ENCODE measurements at regions of chr6 and their contacts with region 1.

Region 1: DNA sequence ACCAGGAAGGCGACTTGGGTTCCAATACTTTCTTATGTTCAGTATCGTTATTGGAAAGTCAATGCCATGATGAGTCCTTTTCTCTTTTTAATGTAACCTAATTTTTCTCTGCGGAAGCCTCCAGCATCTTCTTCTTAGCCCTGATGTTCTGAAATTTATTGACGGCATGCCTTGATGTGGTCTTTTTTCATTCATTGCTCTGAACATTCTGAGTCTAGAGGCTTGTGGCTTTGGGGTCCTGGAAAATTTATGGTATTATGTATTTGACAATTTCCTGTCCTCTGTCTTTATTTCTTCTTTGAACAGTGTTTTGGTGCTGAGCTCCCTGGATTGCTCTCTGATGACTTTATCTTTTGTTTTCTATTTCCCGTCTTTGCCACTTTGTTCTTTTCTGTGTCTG is 28.7 kb upstream of the MAS1 start:
- DNase-seq: no peak
- H3K4me3 ChIP-seq: no peak overlapping the region
- H3K4me3 Mint-ChIP-seq: no peak overlapping the region
- H3K27ac ChIP-seq: no peak overlapping the region
- H3K27ac Mint-ChIP-seq: peak overlapping the region in 1 of 7 donors; percentile 57
- H3K4me1 ChIP-seq: peaks cover 8 to 17% of the 10 kb centered on the region in 2 donors
- H3K4me1 Mint-ChIP-seq: peaks cover 23% of the 10 kb centered on the region
- H3K27me3 ChIP-seq: no peaks in the 10 kb centered on the region
- H3K27me3 Mint-ChIP-seq: peaks cover 0 to 6% (median 1%) of the 10 kb centered on the region in 3 donors
- CTCF ChIP-seq: no peak

Region 2: DNA sequence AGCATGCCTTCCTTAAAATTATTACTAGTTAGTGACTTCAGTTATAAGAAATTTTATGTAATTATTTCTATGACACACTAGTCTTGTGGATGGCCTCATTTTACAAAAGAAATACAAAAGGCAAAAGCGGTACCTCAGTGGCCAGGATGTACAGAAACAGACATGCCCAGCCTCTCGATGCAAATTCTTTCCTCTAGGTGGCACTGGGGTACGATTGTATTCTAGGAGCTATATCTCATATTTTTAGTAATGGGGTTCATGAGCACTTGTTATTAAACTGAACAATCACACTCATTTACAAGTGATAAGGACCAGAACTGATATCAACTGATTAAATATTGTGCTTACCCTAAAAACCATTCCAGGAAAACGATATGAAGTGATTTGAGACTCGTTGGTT is 228.9 kb before region 1 on chr6:
- intact Hi-C with region 1: no loop called
- DNase-seq: no peak
- H3K4me3 ChIP-seq: no peak overlapping the region
- H3K4me3 Mint-ChIP-seq: no peak overlapping the region
- H3K27ac ChIP-seq: no peak overlapping the region
- H3K27ac Mint-ChIP-seq: peak overlapping the region in 1 of 7 donors; percentile 33
- H3K4me1 ChIP-seq: no peaks in the 10 kb centered on the region
- H3K4me1 Mint-ChIP-seq: peaks cover 4% of the 10 kb centered on the region
- H3K27me3 ChIP-seq: no peaks in the 10 kb centered on the region
- H3K27me3 Mint-ChIP-seq: no peaks in the 10 kb centered on the region
- CTCF ChIP-seq: peak; percentile 16

Region 3: DNA sequence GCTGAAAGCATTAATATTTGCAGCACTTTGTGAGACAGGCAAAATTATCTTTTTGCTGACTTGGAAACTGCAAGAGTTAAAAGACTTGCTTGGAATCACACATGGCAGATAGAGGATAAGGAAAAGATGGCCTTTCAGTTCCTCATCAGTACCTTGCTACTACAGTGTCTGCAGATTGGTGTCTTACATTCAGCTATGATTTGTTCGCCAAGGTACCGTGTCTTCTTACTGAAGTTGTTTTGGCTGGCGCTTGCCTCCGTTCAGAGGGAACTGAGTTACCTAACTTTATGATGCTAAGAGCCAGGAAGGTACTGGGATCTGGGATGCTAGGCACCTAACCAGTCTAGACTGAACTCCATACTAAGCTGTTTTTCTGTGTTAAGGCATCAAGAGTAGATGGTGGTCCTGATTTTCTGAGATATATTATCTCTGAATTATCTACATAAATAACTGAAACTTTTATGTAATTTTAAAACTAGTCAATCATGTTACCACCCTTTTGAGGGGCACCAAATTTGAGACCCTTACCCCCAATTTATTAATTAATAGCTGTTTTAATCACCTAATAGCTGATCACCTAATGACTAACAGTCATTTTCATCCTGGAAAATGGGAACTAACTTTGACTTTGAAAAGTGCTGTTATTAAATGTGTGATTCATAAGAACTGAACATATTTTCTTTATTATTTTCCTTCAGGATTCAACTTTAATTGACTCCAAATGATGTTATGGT is 132.3 kb before region 1 on chr6:
- intact Hi-C with region 1: no loop called
- DNase-seq: peak in 2 of 3 donors; percentile 30 to 43
- H3K4me3 ChIP-seq: peak overlapping the region in 1 of 3 experiments; percentile 97
- H3K4me3 Mint-ChIP-seq: peak overlapping the region; percentile 89 to 90
- H3K27ac ChIP-seq: peak overlapping the region in 1 of 2 donors; percentile 89
- H3K27ac Mint-ChIP-seq: peak overlapping the region; percentile 24 to 81 (median 58)
- H3K4me1 ChIP-seq: peaks cover 27 to 44% of the 10 kb centered on the region in 2 donors
- H3K4me1 Mint-ChIP-seq: peaks cover 53% of the 10 kb centered on the region
- H3K27me3 ChIP-seq: no peaks in the 10 kb centered on the region
- H3K27me3 Mint-ChIP-seq: no peaks in the 10 kb centered on the region
- CTCF ChIP-seq: no peak

Region 4: GRCh38 chr6:159829526-159829925 is 32.6 kb before region 1 on chr6:
- intact Hi-C with region 1: no loop called
- DNase-seq: peak; percentile 29 to 37 (median 34)
- H3K4me3 ChIP-seq: peak overlapping the region in 1 of 3 experiments; percentile 7
- H3K4me3 Mint-ChIP-seq: peak overlapping the region in 1 of 2 donors; percentile 59
- H3K27ac ChIP-seq: peak overlapping the region; percentile 26 to 39
- H3K27ac Mint-ChIP-seq: peak overlapping the region; percentile 17 to 85 (median 76)
- H3K4me1 ChIP-seq: peaks cover 28 to 32% of the 10 kb centered on the region in 2 donors
- H3K4me1 Mint-ChIP-seq: peaks cover 30% of the 10 kb centered on the region
- H3K27me3 ChIP-seq: no peaks in the 10 kb centered on the region
- H3K27me3 Mint-ChIP-seq: peaks cover 0 to 4% (median 2%) of the 10 kb centered on the region in 3 donors
- CTCF ChIP-seq: no peak

Region 5: GRCh38 chr6:160051390-160051789 is 189.3 kb after region 1 on chr6:
- intact Hi-C with region 1: loop called in 1 of 2 experiments (anchors 10 kb)
- DNase-seq: no peak
- H3K4me3 ChIP-seq: no peak overlapping the region
- H3K4me3 Mint-ChIP-seq: no peak overlapping the region
- H3K27ac ChIP-seq: no peak overlapping the region
- H3K27ac Mint-ChIP-seq: peak overlapping the region in 1 of 7 donors; percentile 26
- H3K4me1 ChIP-seq: no peaks in the 10 kb centered on the region
- H3K4me1 Mint-ChIP-seq: no peaks in the 10 kb centered on the region
- H3K27me3 ChIP-seq: no peaks in the 10 kb centered on the region
- H3K27me3 Mint-ChIP-seq: peaks cover 0 to 5% (median 4%) of the 10 kb centered on the region in 3 donors
- CTCF ChIP-seq: no peak

Measured in CD14-positive monocyte (primary cell).